PC-9 (cell line): ENCODE measurements at regions of chr7 and their contacts with region 1.

Region 1: GRCh38 chr7:104967595-104967994 is 46.4 kb upstream of the KMT2E start:
- DNase-seq: no peak
- H3K4me3 ChIP-seq: no peak overlapping the region
- H3K27ac ChIP-seq: no peak overlapping the region
- H3K4me1 ChIP-seq: no peaks in the 10 kb centered on the region
- H3K27me3 ChIP-seq: no peaks in the 10 kb centered on the region
- CTCF ChIP-seq: no peak

Region 2: GRCh38 chr7:104767826-104768536 is 199.6 kb before region 1 on chr7:
- CTCF ChIA-PET with region 1: interaction called, 10 read pairs
- POLR2A ChIA-PET with region 1: no interaction called
- intact Hi-C with region 1: no loop called
- DNase-seq: no peak
- H3K4me3 ChIP-seq: no peak overlapping the region
- H3K27ac ChIP-seq: no peak overlapping the region
- H3K4me1 ChIP-seq: no peaks in the 10 kb centered on the region
- H3K27me3 ChIP-seq: peaks cover 14% of the 10 kb centered on the region; the same call in 1 of the 2 replicates
- CTCF ChIP-seq: no peak

Region 3: DNA sequence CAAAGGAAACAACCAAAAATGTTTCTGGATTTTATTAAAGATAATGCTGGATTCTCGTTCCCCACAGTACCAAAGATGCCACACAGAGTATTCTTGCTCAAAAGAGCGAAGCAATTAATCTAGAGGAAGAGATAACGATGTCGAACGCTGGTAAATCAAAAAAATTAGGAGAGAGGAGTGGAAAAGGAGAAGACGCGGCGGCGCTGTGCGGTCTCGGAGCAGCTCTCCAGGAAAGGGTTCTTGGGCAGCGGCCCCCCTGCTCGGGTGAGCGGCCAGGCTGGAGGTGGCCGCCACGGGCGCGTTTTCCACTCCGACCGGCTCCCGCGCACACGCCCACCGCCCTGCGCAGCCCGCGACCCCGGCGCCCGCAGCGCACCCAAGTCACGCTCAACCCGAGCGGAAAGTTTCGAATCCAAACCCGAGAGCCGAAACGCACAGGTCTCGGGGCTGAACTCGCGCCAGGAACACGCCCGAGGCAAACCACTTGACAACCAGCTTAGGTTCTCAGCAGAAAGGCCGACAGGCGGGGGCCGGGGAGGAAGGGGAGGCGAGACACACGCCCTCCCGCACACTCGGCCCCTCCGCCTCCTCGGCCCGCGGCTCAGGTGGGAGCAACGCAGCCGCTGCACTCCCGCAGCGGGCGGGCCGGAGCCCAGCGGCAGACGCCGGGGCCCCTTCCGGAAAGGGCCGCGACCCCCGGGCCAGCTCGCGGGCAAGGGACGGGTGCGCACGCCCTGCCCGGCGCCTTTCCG is 420.2 kb after region 1 on chr7:
- CTCF ChIA-PET with region 1: no interaction called
- POLR2A ChIA-PET with region 1: no interaction called
- intact Hi-C with region 1: no loop called
- DNase-seq: peak; percentile 42 to 62
- H3K4me3 ChIP-seq: peak overlapping the region; percentile 74
- H3K27ac ChIP-seq: no peak overlapping the region
- H3K4me1 ChIP-seq: peaks cover 11% of the 10 kb centered on the region
- H3K27me3 ChIP-seq: no peaks in the 10 kb centered on the region
- CTCF ChIP-seq: no peak